A673 (cell line): ENCODE measurements at regions of chr4 and their contacts with region 1.

Region 1: DNA sequence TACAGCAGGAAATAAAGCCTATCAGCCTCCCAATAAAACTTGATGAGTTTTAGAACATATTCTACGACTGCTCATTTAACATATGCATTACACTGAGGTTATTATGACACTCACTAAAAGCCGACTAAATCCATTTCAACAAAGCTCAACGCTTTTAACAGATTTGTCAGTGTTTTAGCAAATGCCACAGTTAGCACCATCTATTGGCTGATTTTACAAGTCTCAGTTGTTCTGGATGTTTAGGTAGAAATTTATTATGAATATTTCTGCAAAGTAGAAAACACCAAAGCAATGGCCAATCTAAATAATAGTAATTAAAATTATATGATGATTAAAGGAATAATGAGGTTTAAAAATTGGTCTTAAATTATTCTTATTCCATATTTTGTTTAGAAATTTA is 993.2 kb upstream of the PCDH7 start:
- DNase-seq: no peak
- H3K4me3 ChIP-seq: no peak overlapping the region
- H3K27ac ChIP-seq: no peak overlapping the region
- H3K4me1 ChIP-seq: no peaks in the 10 kb centered on the region
- H3K27me3 ChIP-seq: no peaks in the 10 kb centered on the region
- CTCF ChIP-seq: peak; percentile 42; the same call in 1 of the 2 replicates

Region 2: DNA sequence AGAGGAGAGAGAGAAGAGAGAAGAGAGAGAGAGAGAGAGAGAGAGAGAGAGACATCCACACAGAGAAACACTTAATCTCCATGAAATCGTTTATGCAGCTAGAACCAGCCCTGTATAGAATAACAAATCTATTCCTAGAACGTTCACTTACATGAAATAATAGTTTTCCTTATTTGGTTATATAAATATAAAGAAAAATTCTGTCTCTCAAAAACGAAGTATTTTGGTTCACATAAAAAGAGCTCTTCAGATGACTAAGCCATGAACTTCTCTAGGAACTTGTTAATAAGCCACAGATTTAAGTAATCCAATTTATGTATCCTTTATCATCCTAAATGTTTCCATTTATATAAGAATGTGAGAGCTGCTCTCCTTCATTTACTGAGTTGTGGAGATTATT is 321.8 kb before region 1 on chr4:
- CTCF ChIA-PET with region 1: no interaction called
- POLR2A ChIA-PET with region 1: interaction called, 14 read pairs
- intact Hi-C with region 1: no loop called
- DNase-seq: peak; percentile 52
- H3K4me3 ChIP-seq: no peak overlapping the region
- H3K27ac ChIP-seq: no peak overlapping the region
- H3K4me1 ChIP-seq: peaks cover 7% of the 10 kb centered on the region
- H3K27me3 ChIP-seq: no peaks in the 10 kb centered on the region
- CTCF ChIP-seq: no peak